ENCODE measurements at regions of chr3 and their contacts with region 1.

Region 1: DNA sequence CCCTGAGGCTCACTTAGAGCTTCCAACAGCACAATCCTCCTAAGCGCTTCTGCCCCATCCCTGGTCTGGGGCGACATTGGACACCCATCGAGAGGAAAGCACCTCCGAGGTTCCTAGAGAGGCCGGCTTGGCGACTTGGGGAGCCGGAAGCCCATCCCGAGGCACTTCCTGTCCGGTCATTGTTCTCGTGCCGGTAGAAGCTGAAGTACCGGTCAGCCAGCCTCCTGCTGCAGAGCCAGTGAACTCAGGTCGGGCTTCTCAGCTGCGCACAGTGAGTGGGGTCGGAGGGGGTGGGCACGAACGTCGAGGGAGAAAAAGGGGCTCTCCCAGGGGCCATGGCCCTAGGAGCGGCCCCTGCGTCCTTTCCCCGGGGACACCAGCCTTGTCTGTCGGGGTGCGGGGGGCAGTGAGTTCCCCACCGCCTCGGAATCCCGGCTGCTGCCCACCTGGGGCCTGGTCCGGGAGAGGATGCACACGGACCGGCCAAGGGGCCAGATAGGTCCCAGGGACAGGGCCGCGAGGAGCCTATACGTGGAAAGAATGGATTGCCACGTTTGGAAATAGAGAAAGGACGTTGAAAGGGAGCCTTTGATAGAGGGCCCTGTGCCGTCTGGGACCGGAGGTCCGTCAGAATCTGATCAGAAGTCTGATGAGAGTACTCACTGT is at the start of gene ZNF35:
- DNase-seq: peak in 15 of 35 experiments; percentile 0 to 44 (median 2)
- ATAC-seq: peak in 3 of 4 experiments; percentile 20 to 61 (median 30)
- H3K4me3 ChIP-seq: peak within 1 kb of the TSS; percentile 70 to 74
- H3K4me3 Mint-ChIP-seq: peak within 1 kb of the TSS; percentile 80 to 82 (median 80)
- H3K27ac ChIP-seq: peak within 1 kb of the TSS; percentile 43
- H3K27ac Mint-ChIP-seq: peak within 1 kb of the TSS in 1 of 2 donors; percentile 66
- H3K4me1 ChIP-seq: peaks cover 6 to 8% of the 10 kb centered on the region in 2 experiments
- H3K4me1 Mint-ChIP-seq: peaks cover 19 to 25% (median 23%) of the 10 kb centered on the region in 3 donors
- H3K27me3 ChIP-seq: peaks cover 0 to 6% of the 10 kb centered on the region in 2 experiments
- H3K27me3 Mint-ChIP-seq: peaks cover 0 to 2% of the 10 kb centered on the region in 2 donors
- total RNA-seq, gene ZNF35: 2.2 to 3.5 (median 3.0) TPM

Region 2: DNA sequence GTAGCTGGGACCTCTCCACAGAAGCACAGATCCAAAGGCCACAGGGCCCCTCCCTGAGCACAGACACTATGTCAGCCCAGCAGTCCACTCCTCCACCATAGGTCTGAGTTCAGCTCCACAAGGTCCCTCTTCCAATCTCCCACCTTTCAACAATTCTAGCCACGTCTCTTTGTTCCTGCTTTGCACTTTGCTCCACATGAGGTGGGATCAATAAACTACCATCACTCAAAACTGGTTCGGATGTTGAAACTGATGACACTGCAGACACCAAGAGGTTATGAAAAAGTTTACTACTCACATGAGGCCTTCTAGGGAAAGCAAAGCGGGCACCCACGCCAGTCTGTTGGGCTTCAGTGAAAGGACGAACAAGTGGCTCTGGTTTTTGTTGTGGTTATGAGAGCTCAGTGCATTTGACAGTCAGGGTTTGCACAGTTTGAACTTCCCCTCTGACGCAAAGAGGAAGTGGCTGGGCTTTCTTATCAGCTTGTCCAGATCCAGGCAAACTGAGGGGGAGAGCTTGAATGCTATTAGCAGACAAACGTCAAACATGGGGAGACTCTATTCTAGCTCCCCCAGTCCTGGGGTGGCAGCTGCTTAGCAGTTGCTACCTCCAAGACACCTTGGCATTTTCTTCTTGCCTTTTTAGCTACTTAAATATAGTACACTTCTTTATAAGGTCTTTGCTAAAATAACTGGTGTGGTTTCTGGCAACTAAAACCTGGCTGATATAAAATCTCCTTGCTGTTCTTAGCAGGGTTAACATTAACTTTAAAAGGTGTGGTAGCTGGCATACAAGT is 209.0 kb before region 1 on chr3:
- CTCF ChIA-PET with region 1: no interaction called
- POLR2A ChIA-PET with region 1: no interaction called
- DNase-seq: peak; percentile 6 to 85 (median 64)
- ATAC-seq: peak; percentile 82 to 89 (median 88)
- H3K4me3 ChIP-seq: peak overlapping the region; percentile 14 to 40
- H3K4me3 Mint-ChIP-seq: peak overlapping the region; percentile 54 to 68 (median 60)
- H3K27ac ChIP-seq: peak overlapping the region; percentile 88
- H3K27ac Mint-ChIP-seq: peak overlapping the region; percentile 92 to 95
- H3K4me1 ChIP-seq: peaks cover 12 to 24% of the 10 kb centered on the region in 2 experiments
- H3K4me1 Mint-ChIP-seq: peaks cover 24 to 45% (median 42%) of the 10 kb centered on the region in 3 donors
- H3K27me3 ChIP-seq: no peaks in the 10 kb centered on the region
- H3K27me3 Mint-ChIP-seq: no peaks in the 10 kb centered on the region

Region 3: DNA sequence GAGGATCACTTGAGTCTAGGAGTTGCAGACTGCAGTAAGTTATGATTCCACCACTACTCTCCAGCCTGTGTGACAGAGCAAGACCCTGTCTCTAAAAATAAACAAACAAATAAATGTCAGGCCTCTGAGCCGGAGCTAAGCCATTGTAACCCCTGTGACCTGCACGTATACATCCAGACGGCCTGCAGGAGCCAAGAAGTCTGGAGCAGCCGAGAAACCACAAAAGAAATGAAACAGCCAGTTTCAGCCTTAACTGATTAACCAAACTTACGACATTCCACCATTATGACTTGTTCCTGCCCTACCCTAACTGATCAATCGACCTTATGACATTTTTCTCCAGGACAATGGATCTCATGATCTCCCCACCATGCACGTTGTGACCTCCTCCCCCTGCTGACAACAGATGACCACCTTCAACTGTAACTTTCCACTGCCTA is 126.2 kb before region 1 on chr3:
- CTCF ChIA-PET with region 1: no interaction called
- POLR2A ChIA-PET with region 1: interaction called in 1 of 2 experiments, 16 read pairs
- DNase-seq: no peak
- ATAC-seq: no peak
- H3K4me3 ChIP-seq: no peak overlapping the region
- H3K4me3 Mint-ChIP-seq: no peak overlapping the region
- H3K27ac ChIP-seq: no peak overlapping the region
- H3K27ac Mint-ChIP-seq: no peak overlapping the region
- H3K4me1 ChIP-seq: no peaks in the 10 kb centered on the region
- H3K4me1 Mint-ChIP-seq: peaks cover 6 to 11% (median 6%) of the 10 kb centered on the region in 3 donors
- H3K27me3 ChIP-seq: peaks cover 0 to 27% of the 10 kb centered on the region in 2 experiments
- H3K27me3 Mint-ChIP-seq: peaks cover 45 to 54% of the 10 kb centered on the region in 2 donors

Region 4: GRCh38 chr3:44628716-44629115 is 20.0 kb before region 1 on chr3:
- CTCF ChIA-PET with region 1: no interaction called
- POLR2A ChIA-PET with region 1: no interaction called
- DNase-seq: no peak
- ATAC-seq: no peak
- H3K4me3 ChIP-seq: no peak overlapping the region
- H3K4me3 Mint-ChIP-seq: no peak overlapping the region
- H3K27ac ChIP-seq: no peak overlapping the region
- H3K27ac Mint-ChIP-seq: no peak overlapping the region
- H3K4me1 ChIP-seq: peaks cover 4 to 8% of the 10 kb centered on the region in 2 experiments
- H3K4me1 Mint-ChIP-seq: peaks cover 45 to 52% (median 50%) of the 10 kb centered on the region in 3 donors
- H3K27me3 ChIP-seq: no peaks in the 10 kb centered on the region
- H3K27me3 Mint-ChIP-seq: no peaks in the 10 kb centered on the region

Region 5: DNA sequence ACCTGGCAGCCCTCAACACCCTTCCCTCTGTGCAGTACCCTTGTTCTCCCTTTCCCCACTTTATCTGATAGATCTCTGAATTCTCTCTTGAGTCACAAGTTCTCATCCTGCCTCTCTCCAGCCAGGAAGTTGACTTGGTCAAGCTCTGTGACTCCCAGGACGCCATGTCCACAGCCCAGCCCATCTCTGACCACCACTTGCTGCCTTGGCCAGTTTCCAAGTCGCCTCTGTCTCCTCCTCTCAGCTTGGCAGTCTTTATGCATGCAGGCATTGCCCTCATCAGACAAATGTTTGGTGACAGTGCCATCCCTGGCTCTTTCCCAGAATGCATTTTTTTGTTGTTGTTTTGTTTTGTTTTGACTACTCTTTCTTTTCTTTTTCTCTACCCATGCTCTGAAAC is 25.5 kb after region 1 on chr3:
- CTCF ChIA-PET with region 1: no interaction called
- POLR2A ChIA-PET with region 1: no interaction called
- DNase-seq: no peak
- ATAC-seq: no peak
- H3K4me3 ChIP-seq: no peak overlapping the region
- H3K4me3 Mint-ChIP-seq: no peak overlapping the region
- H3K27ac ChIP-seq: no peak overlapping the region
- H3K27ac Mint-ChIP-seq: no peak overlapping the region
- H3K4me1 ChIP-seq: no peaks in the 10 kb centered on the region
- H3K4me1 Mint-ChIP-seq: no peaks in the 10 kb centered on the region
- H3K27me3 ChIP-seq: peaks cover 0 to 10% of the 10 kb centered on the region in 2 experiments
- H3K27me3 Mint-ChIP-seq: peaks cover 3% of the 10 kb centered on the region in 2 donors

Region 6: GRCh38 chr3:44795197-44795596 is 146.5 kb after region 1 on chr3:
- CTCF ChIA-PET with region 1: no interaction called
- POLR2A ChIA-PET with region 1: no interaction called
- DNase-seq: no peak
- ATAC-seq: no peak
- H3K4me3 ChIP-seq: no peak overlapping the region
- H3K4me3 Mint-ChIP-seq: no peak overlapping the region
- H3K27ac ChIP-seq: no peak overlapping the region
- H3K27ac Mint-ChIP-seq: no peak overlapping the region
- H3K4me1 ChIP-seq: no peaks in the 10 kb centered on the region
- H3K4me1 Mint-ChIP-seq: no peaks in the 10 kb centered on the region
- H3K27me3 ChIP-seq: no peaks in the 10 kb centered on the region
- H3K27me3 Mint-ChIP-seq: no peaks in the 10 kb centered on the region

Measured in T-cell (primary cell).